Motor neuron (in vitro differentiated cells): ENCODE measurements at regions of chr2 and their contacts with region 1.

Region 1: GRCh38 chr2:39723946-39724827 is 54.9 kb downstream of the THUMPD2 start:
- ATAC-seq: no peak
- H3K4me3 ChIP-seq: no peak overlapping the region
- H3K27ac ChIP-seq: no peak overlapping the region
- H3K4me1 ChIP-seq: peaks cover 0 to 9% of the 10 kb centered on the region in 2 donors

Region 2: GRCh38 chr2:38892819-38893218 is 831.4 kb before region 1 on chr2:
- in situ Hi-C with region 1: no loop called
- ATAC-seq: no peak
- H3K4me3 ChIP-seq: no peak overlapping the region
- H3K27ac ChIP-seq: no peak overlapping the region
- H3K4me1 ChIP-seq: no peaks in the 10 kb centered on the region

Region 3: GRCh38 chr2:39379643-39380524 is 344.3 kb before region 1 on chr2:
- in situ Hi-C with region 1: loop called in 1 of 9 experiments (anchors 25 kb)
- ATAC-seq: peak; percentile 55 to 85 (median 68)
- H3K4me3 ChIP-seq: no peak overlapping the region
- H3K27ac ChIP-seq: no peak overlapping the region
- H3K4me1 ChIP-seq: peaks cover 0 to 8% of the 10 kb centered on the region in 2 donors

Region 4: DNA sequence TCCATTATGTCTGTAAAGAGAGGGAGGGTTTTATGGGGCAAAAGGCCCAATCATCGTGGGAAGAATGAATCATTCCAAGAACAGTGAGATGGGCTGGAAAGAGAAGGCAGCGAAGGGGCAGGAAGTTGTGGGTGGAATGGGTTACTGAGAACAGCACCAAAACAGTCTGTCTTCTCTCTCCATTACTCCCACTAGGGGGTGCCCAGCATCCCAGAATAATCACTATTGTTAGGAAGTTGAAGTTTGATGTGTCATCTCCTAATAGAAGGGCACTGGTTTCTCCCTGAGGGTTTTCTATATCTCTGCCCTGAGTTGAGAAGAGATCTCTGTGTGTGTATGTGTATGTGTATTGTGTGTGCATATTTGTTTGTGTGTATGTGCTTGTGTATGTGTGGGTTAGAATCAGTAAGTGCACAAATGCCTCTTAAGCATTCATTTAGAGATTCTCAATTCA is 210.5 kb before region 1 on chr2:
- in situ Hi-C with region 1: loop called in 2 of 9 experiments (anchors 25 kb)
- ATAC-seq: peak; percentile 30 to 93 (median 60)
- H3K4me3 ChIP-seq: no peak overlapping the region
- H3K27ac ChIP-seq: no peak overlapping the region
- H3K4me1 ChIP-seq: peaks cover 10% of the 10 kb centered on the region in 2 donors

Region 5: GRCh38 chr2:39954346-39954745 is 230.2 kb after region 1 on chr2:
- in situ Hi-C with region 1: no loop called
- ATAC-seq: no peak
- H3K4me3 ChIP-seq: no peak overlapping the region
- H3K27ac ChIP-seq: no peak overlapping the region
- H3K4me1 ChIP-seq: no peaks in the 10 kb centered on the region